CD4-positive, alpha-beta memory T cell (primary cell): ENCODE measurements at regions of chr2 and their contacts with region 1.

Region 1: DNA sequence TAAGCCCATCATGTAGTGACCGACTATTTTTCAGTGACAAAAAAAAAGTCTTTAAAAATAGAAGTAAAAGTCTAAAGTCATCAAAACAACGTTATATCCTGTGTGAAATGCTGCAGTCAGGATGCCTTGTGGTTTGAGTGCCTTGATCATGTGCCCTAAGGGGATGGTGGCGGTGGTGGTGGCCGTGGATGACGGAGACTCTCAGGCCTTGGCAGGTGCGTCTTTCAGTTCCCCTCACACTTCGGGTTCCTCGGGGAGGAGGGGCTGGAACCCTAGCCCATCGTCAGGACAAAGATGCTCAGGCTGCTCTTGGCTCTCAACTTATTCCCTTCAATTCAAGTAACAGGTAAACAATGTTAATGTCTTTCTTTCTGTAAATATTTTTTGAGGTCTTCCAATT is at the start of gene CD28:
- DNase-seq: peak; percentile 94 to 96 (median 94)
- H3K4me3 ChIP-seq: peak within 1 kb of the TSS; percentile 78 to 90
- H3K4me3 Mint-ChIP-seq: peak within 1 kb of the TSS; percentile 86 to 99 (median 92)
- H3K27ac ChIP-seq: peak within 1 kb of the TSS; percentile 94
- H3K27ac Mint-ChIP-seq: peak within 1 kb of the TSS; percentile 93 to 100 (median 99)
- H3K4me1 ChIP-seq: peaks cover 44% of the 10 kb centered on the region
- H3K4me1 Mint-ChIP-seq: peaks cover 42 to 75% (median 55%) of the 10 kb centered on the region in 4 donors
- H3K27me3 ChIP-seq: no peaks in the 10 kb centered on the region
- H3K27me3 Mint-ChIP-seq: no peaks in the 10 kb centered on the region
- total RNA-seq, gene CD28: 203 to 222 TPM

Region 2: DNA sequence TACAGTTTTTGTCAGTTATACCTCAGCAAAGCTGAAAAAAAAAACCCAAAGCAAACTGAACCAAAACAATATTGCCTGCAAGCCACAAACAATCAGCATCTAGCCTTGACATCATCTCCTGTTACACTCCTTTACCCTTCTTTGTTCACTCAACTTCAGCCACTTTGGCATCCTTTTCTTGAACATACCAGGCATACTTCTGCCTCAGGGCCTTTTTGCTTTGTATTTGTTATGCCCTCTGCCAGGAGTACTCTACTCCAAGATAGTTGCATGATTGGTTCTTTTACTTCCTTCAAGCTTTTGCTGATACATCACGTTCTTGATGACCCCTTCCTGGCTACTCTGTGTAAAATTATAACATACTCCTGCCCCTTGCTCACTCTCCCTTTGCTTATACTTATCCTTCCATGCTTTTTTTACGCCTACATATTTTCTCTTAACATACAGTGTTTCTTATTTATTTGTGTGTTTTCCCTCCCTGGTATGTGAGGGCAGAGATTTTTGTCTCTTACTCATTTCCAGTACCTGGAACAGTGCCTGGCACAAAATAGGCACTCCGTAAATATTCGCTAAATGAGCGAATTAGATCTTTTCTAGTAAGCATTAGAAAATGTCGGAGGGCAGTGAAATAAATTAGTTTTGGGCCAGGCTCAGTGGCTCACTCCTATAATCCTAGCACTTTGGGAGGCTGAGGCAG is 365.5 kb before region 1 on chr2:
- CTCF ChIA-PET with region 1: no interaction called
- POLR2A ChIA-PET with region 1: no interaction called
- intact Hi-C with region 1: no loop called
- DNase-seq: no peak
- H3K4me3 ChIP-seq: no peak overlapping the region
- H3K4me3 Mint-ChIP-seq: no peak overlapping the region
- H3K27ac ChIP-seq: no peak overlapping the region
- H3K27ac Mint-ChIP-seq: no peak overlapping the region
- H3K4me1 ChIP-seq: no peaks in the 10 kb centered on the region
- H3K4me1 Mint-ChIP-seq: peaks cover 0 to 9% (median 6%) of the 10 kb centered on the region in 4 donors
- H3K27me3 ChIP-seq: no peaks in the 10 kb centered on the region
- H3K27me3 Mint-ChIP-seq: no peaks in the 10 kb centered on the region

Region 3: GRCh38 chr2:203484266-203485112 is 221.9 kb before region 1 on chr2:
- CTCF ChIA-PET with region 1: interaction called, 5 read pairs
- POLR2A ChIA-PET with region 1: no interaction called
- intact Hi-C with region 1: loop called (anchors 1 kb)
- DNase-seq: peak; percentile 52 to 62 (median 55)
- H3K4me3 ChIP-seq: no peak overlapping the region
- H3K4me3 Mint-ChIP-seq: no peak overlapping the region
- H3K27ac ChIP-seq: no peak overlapping the region
- H3K27ac Mint-ChIP-seq: peak overlapping the region in 4 of 7 donors; percentile 20 to 84 (median 48)
- H3K4me1 ChIP-seq: peaks cover 7% of the 10 kb centered on the region
- H3K4me1 Mint-ChIP-seq: peaks cover 4 to 6% (median 5%) of the 10 kb centered on the region in 4 donors
- H3K27me3 ChIP-seq: no peaks in the 10 kb centered on the region
- H3K27me3 Mint-ChIP-seq: no peaks in the 10 kb centered on the region

Region 4: DNA sequence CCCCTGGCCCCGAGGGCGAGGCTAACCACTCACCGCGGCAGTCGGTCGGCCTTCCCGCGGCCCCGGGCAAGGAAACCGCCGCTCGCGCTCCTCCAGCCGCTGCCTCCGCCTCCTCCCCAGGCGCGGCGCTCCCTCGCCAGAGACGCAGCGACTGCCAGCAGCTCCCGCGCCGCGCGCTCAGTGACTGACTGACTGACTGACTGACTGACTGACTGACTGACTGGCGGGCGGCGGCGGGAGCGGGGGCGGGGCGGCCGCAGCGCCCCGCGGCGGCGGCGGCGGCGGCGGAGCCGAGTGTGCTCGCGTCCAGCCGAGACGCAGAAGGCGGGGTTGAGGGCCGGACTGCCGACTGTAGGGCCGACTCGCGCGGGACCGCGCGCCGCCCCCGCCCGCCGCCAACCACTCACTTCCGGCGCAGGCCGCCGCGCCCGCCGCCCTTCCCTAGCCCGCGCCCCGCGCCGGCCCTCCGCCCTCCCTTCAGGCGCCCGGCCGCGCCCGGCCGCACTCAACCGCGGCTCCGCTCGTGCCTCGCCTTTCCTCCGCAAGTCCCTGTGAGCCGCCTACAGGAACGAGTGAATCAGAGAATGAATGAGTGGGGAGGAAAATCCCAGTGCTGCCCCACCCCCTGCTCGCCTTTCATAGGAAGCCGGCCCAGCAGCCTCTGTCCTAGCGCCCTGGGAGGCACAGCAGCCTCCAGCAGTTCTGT is 171.2 kb before region 1 on chr2 and contains the start of gene RAPH1:
- CTCF ChIA-PET with region 1: no interaction called
- POLR2A ChIA-PET with region 1: interaction called, 14 read pairs
- intact Hi-C with region 1: loop called (anchors 2 kb)
- DNase-seq: peak; percentile 39 to 67 (median 56)
- H3K4me3 ChIP-seq: peak within 1 kb of the TSS; percentile 20 to 58
- H3K4me3 Mint-ChIP-seq: peak within 1 kb of the TSS; percentile 86 to 95 (median 91)
- H3K27ac ChIP-seq: no peak within 1 kb of the TSS
- H3K27ac Mint-ChIP-seq: peak within 1 kb of the TSS; percentile 72 to 89 (median 79)
- H3K4me1 ChIP-seq: peaks cover 16% of the 10 kb centered on the region
- H3K4me1 Mint-ChIP-seq: peaks cover 14 to 29% (median 21%) of the 10 kb centered on the region in 4 donors
- H3K27me3 ChIP-seq: no peaks in the 10 kb centered on the region
- H3K27me3 Mint-ChIP-seq: peaks cover 8% of the 10 kb centered on the region in 2 donors
- total RNA-seq, gene RAPH1: 2.1 to 2.6 TPM

Region 5: DNA sequence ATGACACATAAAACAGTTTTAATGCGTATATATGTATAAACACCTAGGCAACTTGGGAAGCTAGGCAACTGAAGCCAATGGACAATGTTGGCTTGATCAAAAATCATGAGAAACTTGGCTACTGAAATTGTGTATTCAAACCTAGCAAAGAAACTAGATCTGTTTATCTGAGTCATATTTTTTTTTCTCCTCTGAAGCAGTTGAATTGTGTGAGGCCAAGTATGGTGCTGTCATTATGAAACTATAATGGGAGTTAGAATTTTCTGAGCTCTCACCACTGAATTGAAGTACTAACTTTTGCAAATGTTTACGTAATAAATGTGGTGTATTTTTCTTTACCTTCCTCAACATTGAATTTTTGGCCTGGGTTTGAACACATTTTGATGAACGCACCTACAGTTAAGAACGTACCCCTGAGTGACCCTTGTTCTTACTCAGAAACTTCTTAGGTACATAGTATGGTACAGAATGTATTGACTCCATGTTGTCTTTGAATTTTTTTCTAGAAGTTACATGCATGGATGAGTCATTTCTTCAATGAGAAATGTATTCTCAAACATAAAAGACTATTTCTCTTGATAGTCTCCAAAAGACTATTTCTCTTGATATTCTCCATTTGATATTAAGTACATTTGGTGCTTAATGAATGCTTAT is 23.8 kb after region 1 on chr2:
- CTCF ChIA-PET with region 1: interaction called, 5 read pairs
- POLR2A ChIA-PET with region 1: interaction called, 794 read pairs
- intact Hi-C with region 1: loop called (anchors 2 kb)
- DNase-seq: no peak
- H3K4me3 ChIP-seq: no peak overlapping the region
- H3K4me3 Mint-ChIP-seq: peak overlapping the region; percentile 31 to 82 (median 70)
- H3K27ac ChIP-seq: peak overlapping the region; percentile 30
- H3K27ac Mint-ChIP-seq: peak overlapping the region; percentile 76 to 92 (median 88)
- H3K4me1 ChIP-seq: peaks cover 94% of the 10 kb centered on the region
- H3K4me1 Mint-ChIP-seq: peaks cover 76 to 95% (median 85%) of the 10 kb centered on the region in 4 donors
- H3K27me3 ChIP-seq: no peaks in the 10 kb centered on the region
- H3K27me3 Mint-ChIP-seq: no peaks in the 10 kb centered on the region

Region 6: DNA sequence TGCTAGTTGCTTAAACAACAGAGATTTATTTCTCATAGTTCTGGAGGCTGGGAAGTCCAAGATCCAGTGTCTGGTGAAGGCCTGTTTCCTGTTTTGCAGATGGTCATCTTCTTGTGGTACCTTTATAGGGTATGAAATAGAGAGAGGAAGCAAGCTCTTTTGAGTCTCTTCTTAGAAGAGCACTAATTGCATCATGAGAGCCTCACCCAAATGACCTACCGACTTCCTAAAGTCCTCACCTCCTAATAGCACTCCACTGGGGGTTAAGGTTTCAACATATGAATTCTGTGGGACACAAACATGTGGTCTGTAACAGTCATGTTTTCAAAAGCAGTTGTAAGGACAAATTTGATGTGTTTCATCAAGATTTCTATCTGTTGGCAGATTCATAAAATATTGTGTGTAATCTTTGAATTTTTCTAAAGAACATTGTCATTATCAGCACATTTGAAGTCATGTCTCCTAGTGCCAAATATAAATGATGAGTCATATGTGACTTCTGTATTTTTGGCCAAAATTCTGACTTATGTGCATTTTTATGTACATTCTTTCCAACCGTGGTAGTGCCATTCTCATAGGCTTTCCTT is 45.4 kb after region 1 on chr2:
- CTCF ChIA-PET with region 1: interaction called, 11 read pairs
- POLR2A ChIA-PET with region 1: interaction called, 794 read pairs
- intact Hi-C with region 1: no loop called
- DNase-seq: no peak
- H3K4me3 ChIP-seq: no peak overlapping the region
- H3K4me3 Mint-ChIP-seq: peak overlapping the region in 5 of 8 donors; percentile 15 to 63 (median 32)
- H3K27ac ChIP-seq: no peak overlapping the region
- H3K27ac Mint-ChIP-seq: peak overlapping the region in 5 of 7 donors; percentile 34 to 80 (median 54)
- H3K4me1 ChIP-seq: peaks cover 47% of the 10 kb centered on the region
- H3K4me1 Mint-ChIP-seq: peaks cover 42 to 69% (median 56%) of the 10 kb centered on the region in 4 donors
- H3K27me3 ChIP-seq: no peaks in the 10 kb centered on the region
- H3K27me3 Mint-ChIP-seq: no peaks in the 10 kb centered on the region

Region 7: DNA sequence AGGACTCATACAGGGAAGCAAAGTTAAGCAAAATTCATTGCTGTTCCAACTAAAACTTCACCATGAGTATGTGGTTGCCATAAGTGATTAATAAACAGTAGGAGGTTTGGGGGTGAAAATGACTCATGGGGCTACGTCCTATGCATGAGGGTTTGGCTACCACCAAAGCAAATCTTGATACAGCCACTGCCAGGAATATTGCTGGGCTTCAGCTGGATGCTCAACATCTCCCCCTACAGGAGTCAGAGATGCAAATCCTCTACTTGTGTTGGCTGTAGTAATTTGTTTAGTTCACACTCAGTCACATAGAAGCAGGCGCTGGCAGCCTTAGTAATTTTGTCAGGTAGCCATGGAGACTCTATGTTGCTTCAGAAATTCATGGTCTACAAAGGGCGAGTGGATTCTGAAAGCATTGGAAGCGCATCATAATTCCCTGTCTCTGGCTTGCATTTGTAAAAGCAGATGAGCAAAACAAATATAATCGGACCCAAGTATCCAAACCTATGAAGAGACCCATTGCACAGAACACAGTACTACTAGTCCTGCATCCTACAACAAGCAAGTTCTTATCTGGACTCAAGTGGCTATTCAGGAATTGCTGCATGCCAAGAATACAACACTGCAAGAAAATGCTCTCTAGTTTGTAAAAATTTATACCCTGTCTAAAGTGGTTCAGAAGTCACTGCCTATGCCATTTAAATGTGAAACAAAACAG is 76.0 kb after region 1 on chr2:
- CTCF ChIA-PET with region 1: interaction called, 6 read pairs
- POLR2A ChIA-PET with region 1: interaction called, 5 read pairs
- intact Hi-C with region 1: loop called (anchors 1 kb)
- DNase-seq: peak; percentile 67 to 79 (median 69)
- H3K4me3 ChIP-seq: no peak overlapping the region
- H3K4me3 Mint-ChIP-seq: peak overlapping the region in 3 of 8 donors; percentile 24 to 66 (median 30)
- H3K27ac ChIP-seq: no peak overlapping the region
- H3K27ac Mint-ChIP-seq: peak overlapping the region in 6 of 7 donors; percentile 44 to 85 (median 70)
- H3K4me1 ChIP-seq: peaks cover 20% of the 10 kb centered on the region
- H3K4me1 Mint-ChIP-seq: peaks cover 31 to 55% (median 40%) of the 10 kb centered on the region in 4 donors
- H3K27me3 ChIP-seq: no peaks in the 10 kb centered on the region
- H3K27me3 Mint-ChIP-seq: no peaks in the 10 kb centered on the region

Region 8: DNA sequence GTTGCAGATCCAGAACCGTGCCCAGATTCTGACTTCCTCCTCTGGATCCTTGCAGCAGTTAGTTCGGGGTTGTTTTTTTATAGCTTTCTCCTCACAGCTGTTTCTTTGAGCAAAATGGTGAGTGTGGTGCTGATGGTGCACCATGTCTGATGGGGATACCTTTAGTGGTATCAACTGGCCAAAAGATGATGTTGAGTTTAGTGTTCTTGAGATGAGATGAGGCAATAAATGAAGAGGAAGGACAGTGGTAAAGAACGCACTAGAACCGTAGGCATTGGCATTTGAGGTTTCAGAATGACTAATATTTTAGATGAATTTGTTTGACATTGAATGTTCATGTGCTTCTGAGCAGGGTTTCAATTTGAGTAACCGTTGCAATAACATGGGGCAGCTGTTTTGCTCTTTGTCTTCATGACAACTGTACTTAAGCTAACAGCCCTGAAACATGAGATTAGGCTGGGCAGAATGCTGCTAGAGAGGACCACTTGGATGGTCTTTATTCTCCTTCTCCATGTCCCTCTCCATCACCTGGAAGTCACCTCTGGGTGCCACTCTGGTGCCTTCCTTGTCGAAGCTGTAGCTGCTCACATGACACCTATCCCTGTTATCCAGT is 165.1 kb after region 1 on chr2:
- CTCF ChIA-PET with region 1: no interaction called
- POLR2A ChIA-PET with region 1: interaction called, 37 read pairs
- intact Hi-C with region 1: loop called (anchors 5 kb)
- DNase-seq: no peak
- H3K4me3 ChIP-seq: peak overlapping the region; percentile 17 to 54
- H3K4me3 Mint-ChIP-seq: peak overlapping the region; percentile 85 to 95 (median 90)
- H3K27ac ChIP-seq: peak overlapping the region; percentile 59
- H3K27ac Mint-ChIP-seq: peak overlapping the region; percentile 41 to 89 (median 81)
- H3K4me1 ChIP-seq: peaks cover 84% of the 10 kb centered on the region
- H3K4me1 Mint-ChIP-seq: peaks cover 58 to 87% (median 74%) of the 10 kb centered on the region in 4 donors
- H3K27me3 ChIP-seq: no peaks in the 10 kb centered on the region
- H3K27me3 Mint-ChIP-seq: no peaks in the 10 kb centered on the region

Region 9: GRCh38 chr2:203891474-203891873 is 185.1 kb after region 1 on chr2:
- CTCF ChIA-PET with region 1: no interaction called
- POLR2A ChIA-PET with region 1: no interaction called
- intact Hi-C with region 1: no loop called
- DNase-seq: no peak
- H3K4me3 ChIP-seq: no peak overlapping the region
- H3K4me3 Mint-ChIP-seq: peak overlapping the region in 1 of 8 donors; percentile 22
- H3K27ac ChIP-seq: no peak overlapping the region
- H3K27ac Mint-ChIP-seq: no peak overlapping the region
- H3K4me1 ChIP-seq: peaks cover 7% of the 10 kb centered on the region
- H3K4me1 Mint-ChIP-seq: peaks cover 1 to 13% (median 6%) of the 10 kb centered on the region in 4 donors
- H3K27me3 ChIP-seq: no peaks in the 10 kb centered on the region
- H3K27me3 Mint-ChIP-seq: peaks cover 0 to 1% of the 10 kb centered on the region in 2 donors

Region 10: GRCh38 chr2:204116159-204116792 is 409.9 kb after region 1 on chr2:
- CTCF ChIA-PET with region 1: no interaction called
- POLR2A ChIA-PET with region 1: no interaction called
- intact Hi-C with region 1: no loop called
- DNase-seq: no peak
- H3K4me3 ChIP-seq: no peak overlapping the region
- H3K4me3 Mint-ChIP-seq: no peak overlapping the region
- H3K27ac ChIP-seq: no peak overlapping the region
- H3K27ac Mint-ChIP-seq: no peak overlapping the region
- H3K4me1 ChIP-seq: peaks cover 19% of the 10 kb centered on the region
- H3K4me1 Mint-ChIP-seq: peaks cover 17 to 36% (median 22%) of the 10 kb centered on the region in 4 donors
- H3K27me3 ChIP-seq: no peaks in the 10 kb centered on the region
- H3K27me3 Mint-ChIP-seq: no peaks in the 10 kb centered on the region